ENCODE measurements at regions of chr10 and their contacts with region 1.

Region 1: DNA sequence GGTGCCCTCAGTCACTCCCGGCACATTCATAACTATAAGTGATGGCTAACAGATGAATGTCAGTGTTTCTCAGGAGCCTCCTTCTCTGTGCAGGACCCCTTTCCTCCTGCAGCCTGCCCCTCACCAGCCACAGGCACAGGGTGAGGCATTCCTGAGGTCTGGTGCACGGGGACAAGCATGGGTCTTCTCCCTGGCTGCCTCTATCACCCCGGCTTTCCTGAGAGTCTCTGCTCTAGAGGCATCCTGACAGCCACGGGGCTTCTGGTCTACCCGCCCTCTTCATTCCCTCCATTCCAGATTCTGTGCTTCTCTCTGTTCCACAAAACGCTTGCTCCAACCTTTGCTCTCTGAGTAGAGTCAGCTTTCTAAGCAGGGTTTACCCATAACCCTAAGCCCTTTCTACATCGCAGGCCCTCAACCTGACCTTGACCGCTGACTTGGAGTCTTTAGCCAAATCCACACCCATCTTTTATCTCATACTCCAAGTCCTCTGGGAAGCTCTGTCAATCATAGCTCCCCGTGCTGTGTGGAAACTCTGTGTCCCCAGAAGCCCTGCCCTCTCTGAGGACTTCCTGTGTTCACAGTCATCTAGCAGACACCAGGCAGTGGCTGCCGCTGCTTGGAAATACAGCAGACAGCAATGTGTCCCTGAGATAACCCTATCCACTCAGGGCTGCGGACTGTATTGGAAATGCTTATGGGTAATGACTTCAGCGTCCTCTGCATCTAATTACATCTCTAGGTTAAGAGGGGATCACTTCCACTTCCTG is 159.0 kb downstream of the SFMBT2 start:
- DNase-seq: peak; percentile 81
- ATAC-seq: peak; percentile 97

Region 2: GRCh38 chr10:6920072-6921019 is 331.5 kb before region 1 on chr10:
- intact Hi-C with region 1: loop called (anchors 5 kb)
- DNase-seq: peak; percentile 86
- ATAC-seq: peak; percentile 95

Region 3: DNA sequence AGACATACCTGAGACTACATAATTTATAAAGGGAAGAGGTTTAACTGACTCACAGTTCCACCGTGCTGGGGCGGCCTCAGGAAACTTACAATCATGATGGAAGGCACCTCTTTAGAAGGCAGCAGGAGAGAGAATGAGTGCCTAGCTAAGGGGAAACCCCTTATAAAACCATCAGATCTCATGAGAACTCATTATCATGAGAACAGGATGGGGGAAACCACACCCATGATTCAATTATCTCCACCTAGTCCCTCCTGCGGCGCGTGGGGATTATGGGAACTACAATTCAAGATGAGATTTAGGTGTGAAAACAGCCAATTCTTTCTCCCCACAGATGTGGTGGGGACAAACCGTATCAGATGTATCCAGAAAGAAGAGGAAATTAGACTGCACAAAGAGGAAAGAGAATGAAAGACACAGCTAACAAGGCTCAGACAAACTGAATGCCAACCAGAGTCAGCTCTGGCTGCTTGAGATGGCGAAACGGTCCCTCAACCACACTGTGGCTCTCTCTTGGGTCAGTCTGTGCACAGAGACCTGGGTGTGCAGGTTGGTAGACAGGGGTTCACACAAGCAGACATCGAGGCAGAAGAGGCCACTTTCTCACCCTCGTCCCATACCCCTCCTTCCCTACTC is 216.6 kb before region 1 on chr10:
- intact Hi-C with region 1: no loop called
- DNase-seq: no peak
- ATAC-seq: no peak

Region 4: DNA sequence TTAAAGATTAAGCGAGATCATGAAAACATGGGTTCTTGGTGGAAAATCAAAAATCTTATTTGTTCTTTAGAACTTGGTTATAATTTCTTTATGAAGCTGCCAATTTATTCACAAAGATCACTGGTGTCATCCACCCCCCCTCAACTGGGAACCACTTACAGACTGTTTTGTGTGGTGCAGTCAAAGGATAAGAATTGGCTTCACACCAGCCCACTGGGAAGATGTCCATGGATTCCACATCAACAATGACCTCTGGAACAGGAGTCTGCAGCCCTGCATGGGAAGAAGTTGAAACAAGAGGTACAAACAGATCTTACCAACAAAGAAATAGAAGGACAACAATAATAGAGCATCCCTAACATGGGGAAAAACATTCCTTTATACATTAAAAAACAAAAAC is 46.2 kb before region 1 on chr10:
- intact Hi-C with region 1: loop called (anchors 5 kb)
- DNase-seq: no peak
- ATAC-seq: peak; percentile 85

Measured in Right ventricle myocardium inferior (tissue), 1 donor.